Mammary epithelial cell (primary cell): ENCODE measurements at regions of chr7 and their contacts with region 1.

Region 1: GRCh38 chr7:84637568-84638338 is 443.2 kb upstream of the SEMA3A start:
- DNase-seq: peak; percentile 58
- H3K4me3 ChIP-seq: no peak overlapping the region
- H3K27ac ChIP-seq: peak overlapping the region; percentile 71
- H3K4me1 ChIP-seq: peaks cover 15% of the 10 kb centered on the region
- H3K27me3 ChIP-seq: no peaks in the 10 kb centered on the region
- CTCF ChIP-seq: no peak

Region 2: GRCh38 chr7:84697506-84697905 is 59.8 kb after region 1 on chr7:
- CTCF ChIA-PET with region 1: no interaction called
- dilution Hi-C with region 1: no loop called
- in situ Hi-C with region 1: no loop called
- intact Hi-C with region 1: loop called (anchors 10 kb)
- DNase-seq: peak; percentile 84
- H3K4me3 ChIP-seq: peak overlapping the region in 1 of 3 experiments; percentile 3
- H3K27ac ChIP-seq: peak overlapping the region; percentile 49
- H3K4me1 ChIP-seq: peaks cover 2% of the 10 kb centered on the region
- H3K27me3 ChIP-seq: no peaks in the 10 kb centered on the region
- CTCF ChIP-seq: no peak